ENCODE measurements at regions of chr9 and their contacts with region 1.

Region 1: GRCh38 chr9:93592643-93593021 is 16.2 kb downstream of the PHF2 start:
- DNase-seq: peak; percentile 59
- ATAC-seq: peak; percentile 93
- H3K4me3 Mint-ChIP-seq: no peak overlapping the region
- H3K27ac Mint-ChIP-seq: peak overlapping the region; percentile 74; the same call in 1 of the 2 replicates
- H3K4me1 Mint-ChIP-seq: peaks cover 39% of the 10 kb centered on the region
- H3K27me3 Mint-ChIP-seq: no peaks in the 10 kb centered on the region
- CTCF ChIP-seq: peak; percentile 20; the same call in 1 of the 2 replicates

Region 2: DNA sequence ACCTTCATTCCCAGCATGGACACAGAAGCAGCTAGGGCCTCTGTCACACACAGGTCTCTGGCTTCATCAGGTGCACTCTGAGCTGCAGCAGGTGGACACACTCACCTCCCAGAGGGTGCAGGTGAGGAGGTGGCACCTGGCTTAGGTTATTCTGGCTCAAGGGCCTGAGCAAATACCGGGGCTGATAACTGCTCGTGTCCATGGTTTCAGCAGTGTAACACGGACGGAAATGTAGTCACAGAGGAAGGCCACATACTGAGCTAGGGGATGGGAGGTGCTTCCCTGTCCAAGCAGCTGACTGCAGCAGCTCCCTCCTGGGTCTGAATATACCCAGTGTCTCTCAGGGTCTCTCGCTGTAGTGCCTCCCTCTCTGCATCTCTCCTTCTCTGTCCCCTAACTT is 10.5 kb before region 1 on chr9:
- CTCF ChIA-PET with region 1: interaction called, 29 read pairs
- POLR2A ChIA-PET with region 1: no interaction called
- DNase-seq: no peak
- ATAC-seq: peak; percentile 21
- H3K4me3 Mint-ChIP-seq: no peak overlapping the region
- H3K27ac Mint-ChIP-seq: no peak overlapping the region
- H3K4me1 Mint-ChIP-seq: peaks cover 31% of the 10 kb centered on the region
- H3K27me3 Mint-ChIP-seq: peaks cover 7% of the 10 kb centered on the region
- CTCF ChIP-seq: no peak

Region 3: DNA sequence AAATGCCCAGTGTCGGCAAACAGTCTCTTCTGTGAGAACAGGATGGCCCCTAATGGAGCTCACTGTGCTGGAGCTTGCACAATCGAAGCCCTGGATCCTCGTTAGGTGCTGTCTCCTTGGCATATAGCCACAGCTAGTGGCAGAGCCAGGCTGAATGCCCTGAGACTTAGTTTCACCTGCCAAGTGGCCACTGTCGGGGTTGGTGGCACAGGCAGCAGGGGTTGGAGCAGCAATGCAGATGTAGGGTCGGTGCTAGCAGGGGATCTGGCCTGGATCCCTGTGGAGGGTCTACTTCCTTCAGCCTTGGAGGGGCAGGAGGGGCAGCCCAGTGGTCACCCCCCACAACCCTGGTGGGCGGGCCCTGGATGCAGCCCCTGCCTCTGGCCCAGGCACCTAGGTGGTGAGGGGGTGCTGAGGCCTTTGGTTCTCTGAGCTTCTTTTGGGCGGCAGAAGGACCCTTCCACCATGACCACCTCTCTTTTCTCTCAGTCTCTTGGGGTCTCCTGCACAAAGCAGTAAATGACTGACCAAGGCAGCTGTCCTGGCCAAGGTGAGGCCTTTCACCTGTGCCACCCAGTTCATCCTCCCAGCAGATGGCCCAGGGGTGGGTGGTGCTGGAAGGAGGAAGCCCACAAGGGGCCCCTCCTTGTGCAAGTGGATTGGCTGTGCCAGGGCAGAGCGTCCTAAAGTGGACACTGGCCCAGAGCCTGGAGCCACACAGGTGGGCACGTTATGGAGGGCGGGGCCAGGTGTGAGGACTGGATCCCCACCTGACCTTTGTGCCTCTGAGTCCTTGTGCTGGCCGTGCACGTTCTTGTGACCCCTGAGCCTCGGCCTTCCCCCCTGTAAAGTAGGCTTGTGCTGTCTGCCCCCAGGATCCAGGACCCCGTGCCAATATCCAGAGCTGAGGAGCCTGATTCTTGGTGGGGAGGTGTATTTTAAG is 28.5 kb after region 1 on chr9:
- CTCF ChIA-PET with region 1: interaction called, 13 read pairs
- POLR2A ChIA-PET with region 1: no interaction called
- DNase-seq: no peak
- ATAC-seq: no peak
- H3K4me3 Mint-ChIP-seq: no peak overlapping the region
- H3K27ac Mint-ChIP-seq: no peak overlapping the region
- H3K4me1 Mint-ChIP-seq: peaks cover 18% of the 10 kb centered on the region
- H3K27me3 Mint-ChIP-seq: no peaks in the 10 kb centered on the region
- CTCF ChIP-seq: no peak

Region 4: DNA sequence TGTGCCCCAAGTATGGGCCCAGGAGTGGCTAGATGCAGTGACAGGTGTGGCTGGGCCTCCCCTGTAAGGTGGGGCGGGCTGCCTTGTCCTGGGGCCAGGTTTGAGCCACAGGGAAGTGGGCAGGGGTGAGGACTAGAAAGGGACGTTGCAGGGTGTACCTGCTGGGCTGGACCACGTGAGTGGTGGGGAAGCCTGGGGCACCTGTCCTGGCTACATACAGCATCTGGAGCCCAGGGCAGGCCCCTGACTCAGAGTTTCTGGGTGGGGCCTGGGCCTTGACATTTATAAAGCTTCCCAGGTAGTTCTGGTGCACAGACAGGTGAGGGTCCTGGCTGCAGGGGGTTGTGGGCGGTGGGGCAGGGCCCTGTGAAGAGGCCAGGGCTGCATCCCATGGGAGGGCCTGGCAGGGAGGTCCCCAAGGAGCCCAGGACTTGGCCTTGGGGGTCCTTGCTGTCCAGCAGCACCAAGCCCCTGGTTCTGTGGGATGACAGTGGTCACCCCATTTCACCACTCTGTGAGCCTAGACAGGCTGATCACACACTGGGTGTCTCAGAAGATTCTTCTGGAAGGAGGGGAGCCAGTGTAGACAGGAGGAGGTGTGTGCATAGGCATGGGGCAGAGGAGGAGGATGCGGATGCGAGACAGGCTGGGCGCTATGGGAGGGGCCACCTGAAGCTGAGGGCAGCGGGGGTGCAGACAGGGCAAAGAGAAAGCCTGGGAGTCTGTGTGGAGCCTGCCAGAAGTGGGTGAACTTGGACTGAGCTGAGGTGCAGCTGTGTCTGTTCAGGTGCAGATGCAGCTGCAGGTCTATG is 77.8 kb after region 1 on chr9:
- CTCF ChIA-PET with region 1: no interaction called
- POLR2A ChIA-PET with region 1: no interaction called
- DNase-seq: peak; percentile 7
- ATAC-seq: no peak
- H3K4me3 Mint-ChIP-seq: no peak overlapping the region
- H3K27ac Mint-ChIP-seq: no peak overlapping the region
- H3K4me1 Mint-ChIP-seq: no peaks in the 10 kb centered on the region
- H3K27me3 Mint-ChIP-seq: no peaks in the 10 kb centered on the region
- CTCF ChIP-seq: no peak